Breast epithelium (tissue), 4 donors: ENCODE measurements at regions of chr6 and their contacts with region 1.

Region 1: DNA sequence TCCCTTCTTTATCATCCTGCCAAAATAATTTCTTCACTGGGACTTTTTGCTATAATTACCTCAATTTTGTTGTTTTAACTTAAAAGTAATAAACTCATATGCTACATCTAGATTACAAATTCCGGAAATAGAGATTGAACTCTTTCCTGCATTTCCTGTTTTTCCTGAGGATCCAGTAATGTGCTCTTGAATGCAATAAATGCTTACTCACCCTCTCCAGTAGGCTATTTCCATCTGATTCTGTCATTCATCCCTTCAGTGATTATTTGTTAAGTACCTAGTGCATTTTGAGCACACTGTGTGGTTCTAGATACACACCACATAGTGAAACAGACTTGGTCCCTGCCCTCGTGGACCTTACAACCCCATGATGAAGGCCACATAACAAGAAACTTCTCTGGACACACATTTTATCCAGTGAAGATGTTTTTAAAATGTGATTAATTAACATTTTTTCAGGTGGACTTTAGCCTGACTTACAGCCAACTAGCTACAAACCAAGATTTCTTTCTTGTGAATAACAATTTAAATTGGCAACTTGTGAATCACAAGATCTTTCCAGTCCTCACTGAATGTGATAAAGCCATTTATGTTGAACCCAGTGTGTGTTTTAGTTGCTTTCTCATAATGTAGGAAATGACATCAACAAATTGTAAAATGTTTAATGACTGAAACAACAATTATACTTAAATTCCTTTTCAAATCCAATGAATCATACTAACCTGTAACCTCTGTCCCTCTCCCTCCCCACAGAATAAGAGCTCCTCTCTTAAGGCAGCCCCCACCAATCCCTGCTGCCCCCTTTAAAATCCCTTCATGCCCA is 272.3 kb downstream of the KHDC1L start:
- DNase-seq: no peak
- H3K4me3 ChIP-seq: no peak overlapping the region
- H3K27ac ChIP-seq: no peak overlapping the region
- H3K4me1 ChIP-seq: no peaks in the 10 kb centered on the region
- H3K27me3 ChIP-seq: no peaks in the 10 kb centered on the region
- CTCF ChIP-seq: no peak
- POLR2A ChIP-seq: no peak

Region 2: GRCh38 chr6:72968704-72969103 is 15.7 kb after region 1 on chr6:
- intact Hi-C with region 1: loop called (anchors 1 kb)
- DNase-seq: no peak
- H3K4me3 ChIP-seq: no peak overlapping the region
- H3K27ac ChIP-seq: no peak overlapping the region
- H3K4me1 ChIP-seq: no peaks in the 10 kb centered on the region
- H3K27me3 ChIP-seq: no peaks in the 10 kb centered on the region
- CTCF ChIP-seq: no peak
- POLR2A ChIP-seq: no peak

Region 3: GRCh38 chr6:73145690-73146089 is 192.7 kb after region 1 on chr6:
- intact Hi-C with region 1: no loop called
- DNase-seq: no peak
- H3K4me3 ChIP-seq: no peak overlapping the region
- H3K27ac ChIP-seq: no peak overlapping the region
- H3K4me1 ChIP-seq: no peaks in the 10 kb centered on the region
- H3K27me3 ChIP-seq: no peaks in the 10 kb centered on the region
- CTCF ChIP-seq: no peak
- POLR2A ChIP-seq: no peak

Region 4: GRCh38 chr6:73695619-73696421 is 742.8 kb after region 1 on chr6 and contains the start of gene CD109:
- intact Hi-C with region 1: no loop called
- DNase-seq: no peak
- H3K4me3 ChIP-seq: peak within 1 kb of the TSS; percentile 64 to 82 (median 65)
- H3K27ac ChIP-seq: peak within 1 kb of the TSS; percentile 64 to 70
- H3K4me1 ChIP-seq: no peaks in the 10 kb centered on the region
- H3K27me3 ChIP-seq: no peaks in the 10 kb centered on the region
- CTCF ChIP-seq: no peak
- POLR2A ChIP-seq: no peak
- total RNA-seq, gene CD109: 10.2 to 16.8 (median 13.3) TPM